ENCODE measurements at regions of chrX and their contacts with region 1.

Region 1: DNA sequence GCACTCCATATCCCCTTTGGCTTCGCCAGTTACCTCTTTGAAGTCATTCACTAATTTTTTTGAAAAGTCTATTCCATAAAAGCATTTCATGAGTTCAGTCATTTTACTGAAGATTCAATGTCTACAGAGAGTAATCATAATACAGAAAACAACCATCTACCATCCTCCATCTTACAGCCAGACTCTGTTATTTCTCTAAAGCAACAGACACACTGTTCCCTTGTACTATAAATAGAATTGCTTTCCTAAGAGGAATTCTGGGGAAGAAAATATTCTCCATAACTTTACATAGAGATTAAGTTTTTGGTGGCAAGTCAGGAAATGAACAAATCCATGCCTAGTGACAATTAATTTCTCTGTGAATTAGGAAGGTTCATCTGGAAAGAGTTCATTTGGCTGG is 37.0 kb downstream of the XK start:
- DNase-seq: no peak
- H3K4me3 ChIP-seq: no peak overlapping the region
- H3K27ac ChIP-seq: peak overlapping the region; percentile 61 to 79 (median 68)
- H3K4me1 ChIP-seq: peaks cover 0 to 11% (median 3%) of the 10 kb centered on the region in 4 donors
- H3K27me3 ChIP-seq: no peaks in the 10 kb centered on the region
- CTCF ChIP-seq: no peak
- EP300 ChIP-seq: no peak
- POLR2A ChIP-seq: no peak

Region 2: GRCh38 chrX:37578045-37578444 is 144.6 kb before region 1 on chrX:
- intact Hi-C with region 1: loop called (anchors 10 kb)
- DNase-seq: no peak
- H3K4me3 ChIP-seq: no peak overlapping the region
- H3K27ac ChIP-seq: peak overlapping the region; percentile 33 to 68 (median 56)
- H3K4me1 ChIP-seq: no peaks in the 10 kb centered on the region
- H3K27me3 ChIP-seq: no peaks in the 10 kb centered on the region
- CTCF ChIP-seq: no peak
- EP300 ChIP-seq: no peak
- POLR2A ChIP-seq: no peak

Region 3: GRCh38 chrX:37685452-37686353 is 36.9 kb before region 1 on chrX and contains the start of gene XK:
- intact Hi-C with region 1: loop called (anchors 5 kb)
- DNase-seq: peak; percentile 76
- H3K4me3 ChIP-seq: peak within 1 kb of the TSS; percentile 34 to 61 (median 53)
- H3K27ac ChIP-seq: peak within 1 kb of the TSS; percentile 85 to 92 (median 87)
- H3K4me1 ChIP-seq: peaks cover 0 to 27% (median 9%) of the 10 kb centered on the region in 4 donors
- H3K27me3 ChIP-seq: no peaks in the 10 kb centered on the region
- CTCF ChIP-seq: no peak
- EP300 ChIP-seq: no peak
- POLR2A ChIP-seq: peak in 1 of 2 donors; percentile 18
- total RNA-seq, gene XK: 14.1 to 27.0 (median 20.3) TPM